Activated T-helper 1 cell treated with anti-CD3 and anti-CD28 coated beads, Interleukin-12 subunit alpha, Interleukin-12 subunit beta, Interleukin-2, Interleukin-4 antibody, amounts not matched to agents 30 ng/mL and 10 ng/mL and 1 ng/mL, durations not matched to agents 14 hours and 24 hours and 36 hours (primary cell): ENCODE measurements at regions of chr1 and their contacts with region 1.

Region 1: DNA sequence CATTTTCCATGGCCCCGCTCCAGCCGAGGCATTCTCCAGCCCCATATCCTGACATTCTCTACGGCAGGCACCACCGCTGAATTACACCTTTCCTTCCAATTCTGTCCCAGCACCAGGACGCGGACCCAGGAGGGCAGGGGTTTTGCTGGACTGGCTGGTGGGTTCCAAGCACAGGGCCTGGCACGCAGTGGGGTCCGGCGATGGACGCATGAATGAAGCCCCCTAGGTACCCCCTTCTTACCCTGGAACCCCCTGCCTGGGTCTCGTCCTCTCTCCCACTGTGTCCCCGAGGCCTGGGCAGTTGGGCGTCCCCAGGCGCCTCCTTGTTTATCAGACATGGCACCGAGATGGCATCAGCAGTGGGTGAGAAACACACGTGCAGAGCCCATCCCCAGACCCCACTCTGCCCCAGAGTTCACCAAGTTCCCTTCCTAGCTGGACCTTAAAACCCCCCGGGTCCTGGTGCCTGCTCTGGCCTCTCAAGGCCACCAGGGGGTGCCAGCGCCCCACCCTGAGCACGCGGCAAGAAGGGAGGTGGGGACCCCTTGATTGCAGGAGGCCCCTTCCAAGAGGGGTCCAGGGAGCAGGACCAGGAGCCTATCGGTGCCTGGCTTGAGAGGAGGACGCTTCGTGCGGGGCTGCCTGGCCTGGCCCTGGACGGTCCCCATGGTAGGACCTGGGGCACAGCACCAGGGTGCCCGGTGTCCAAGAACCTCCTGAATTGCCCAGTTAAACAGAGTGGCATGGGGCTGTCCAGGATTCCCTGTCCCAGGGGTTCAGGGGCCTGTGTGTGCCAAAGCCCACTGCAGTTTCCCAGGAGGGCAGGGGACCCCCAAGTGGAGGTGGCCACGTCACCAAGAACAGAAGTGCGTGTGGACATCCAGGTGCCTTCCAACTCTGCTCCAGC is 46.1 kb downstream of the MEGF6 start:
- DNase-seq: no peak
- H3K4me3 Mint-ChIP-seq: no peak overlapping the region
- H3K27ac Mint-ChIP-seq: no peak overlapping the region
- H3K4me1 Mint-ChIP-seq: no peaks in the 10 kb centered on the region
- H3K27me3 Mint-ChIP-seq: no peaks in the 10 kb centered on the region

Region 2: DNA sequence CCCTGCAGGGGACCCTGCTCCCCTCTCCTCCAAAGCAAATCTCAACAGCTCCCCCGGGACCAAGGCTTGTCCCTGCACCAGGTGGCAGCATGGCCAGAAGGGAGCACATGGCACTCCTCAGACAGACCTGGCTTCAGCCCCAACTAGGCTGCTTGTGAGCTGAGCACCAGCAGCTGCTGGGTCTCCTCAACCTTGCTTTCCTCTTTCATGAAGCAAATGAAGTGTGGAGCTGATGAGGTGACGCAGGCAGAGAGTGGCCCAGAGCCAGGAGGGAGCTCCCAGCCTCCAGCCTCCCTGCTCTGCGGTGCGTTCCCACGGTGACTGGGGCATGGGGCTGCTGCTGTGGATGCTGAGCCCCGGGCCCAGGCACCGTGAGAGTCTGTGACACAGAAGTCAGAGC is 12.1 kb after region 1 on chr1:
- intact Hi-C with region 1: no loop called
- DNase-seq: no peak
- H3K4me3 Mint-ChIP-seq: no peak overlapping the region
- H3K27ac Mint-ChIP-seq: no peak overlapping the region
- H3K4me1 Mint-ChIP-seq: no peaks in the 10 kb centered on the region
- H3K27me3 Mint-ChIP-seq: no peaks in the 10 kb centered on the region

Region 3: GRCh38 chr1:3727042-3727824 is 162.1 kb after region 1 on chr1:
- intact Hi-C with region 1: loop called (anchors 1 kb)
- DNase-seq: no peak
- H3K4me3 Mint-ChIP-seq: no peak overlapping the region
- H3K27ac Mint-ChIP-seq: no peak overlapping the region
- H3K4me1 Mint-ChIP-seq: no peaks in the 10 kb centered on the region
- H3K27me3 Mint-ChIP-seq: no peaks in the 10 kb centered on the region